ENCODE measurements at regions of chr18 and their contacts with region 1.

Region 1: DNA sequence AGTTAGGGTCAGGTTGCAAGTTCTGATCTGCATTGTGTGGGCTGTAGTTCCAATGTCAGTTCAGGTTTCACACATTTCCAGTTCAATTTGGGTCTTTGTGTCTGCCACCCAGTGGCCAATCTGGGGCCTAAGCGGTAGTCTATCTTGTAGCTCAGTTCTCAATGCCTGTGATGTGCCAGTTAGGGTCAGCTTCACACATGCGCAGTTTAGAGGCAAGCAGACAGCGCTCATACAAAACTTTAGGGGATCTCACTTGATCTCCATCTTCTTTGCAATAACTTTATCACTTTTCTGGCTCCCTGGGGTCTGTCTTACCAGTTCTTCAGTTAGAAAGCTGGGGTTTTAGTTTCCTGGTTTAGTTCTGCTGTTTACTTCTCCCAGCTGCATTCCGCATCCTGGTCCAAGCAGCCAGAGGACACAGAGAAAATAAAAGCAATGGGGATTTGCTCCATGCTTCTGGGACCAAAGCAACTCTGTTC is 11.0 kb upstream of the ZNF24 start:
- DNase-seq: no peak
- H3K4me3 ChIP-seq: no peak overlapping the region
- H3K27me3 ChIP-seq: no peaks in the 10 kb centered on the region
- CTCF ChIP-seq: peak; percentile 87

Region 2: GRCh38 chr18:35231052-35231451 is 124.1 kb before region 1 on chr18:
- CTCF ChIA-PET with region 1: interaction called, 17 read pairs
- POLR2A ChIA-PET with region 1: no interaction called
- DNase-seq: no peak
- H3K4me3 ChIP-seq: no peak overlapping the region
- H3K27me3 ChIP-seq: no peaks in the 10 kb centered on the region
- CTCF ChIP-seq: peak; percentile 93

Region 3: DNA sequence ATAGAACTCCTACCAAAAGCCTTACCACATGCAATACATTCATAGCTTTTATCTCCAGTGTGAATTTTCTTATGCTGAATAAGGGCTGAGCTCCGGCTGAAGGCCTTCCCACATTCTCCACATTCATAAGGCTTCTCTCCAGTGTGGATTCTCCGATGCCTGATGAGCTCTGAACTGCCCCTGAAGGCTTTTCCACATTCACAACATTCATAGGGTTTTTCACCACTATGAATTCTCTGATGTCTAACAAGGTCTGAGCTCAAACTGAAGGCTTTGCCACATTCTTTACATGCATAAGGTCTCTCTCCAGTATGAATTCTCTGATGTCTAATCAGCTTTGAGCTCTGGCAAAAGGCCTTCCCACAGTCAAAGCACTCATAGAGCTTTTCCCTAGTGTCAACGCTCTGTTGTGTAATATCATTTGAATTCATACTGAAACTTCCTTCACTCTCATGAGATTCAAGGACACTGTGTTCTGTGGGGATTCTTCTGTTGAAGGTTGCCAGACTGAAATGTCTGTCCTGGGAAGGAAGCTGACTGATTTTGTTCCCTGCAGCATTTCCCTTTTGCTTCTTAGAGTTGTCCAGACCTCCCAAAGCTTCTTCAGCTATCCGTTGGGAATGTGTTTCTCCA is 101.4 kb before region 1 on chr18:
- CTCF ChIA-PET with region 1: no interaction called
- POLR2A ChIA-PET with region 1: no interaction called
- DNase-seq: no peak
- H3K4me3 ChIP-seq: no peak overlapping the region
- H3K27me3 ChIP-seq: no peaks in the 10 kb centered on the region
- CTCF ChIP-seq: no peak

Measured in BJ (cell line).